ENCODE measurements at regions of chr1 and their contacts with region 1.

Region 1: DNA sequence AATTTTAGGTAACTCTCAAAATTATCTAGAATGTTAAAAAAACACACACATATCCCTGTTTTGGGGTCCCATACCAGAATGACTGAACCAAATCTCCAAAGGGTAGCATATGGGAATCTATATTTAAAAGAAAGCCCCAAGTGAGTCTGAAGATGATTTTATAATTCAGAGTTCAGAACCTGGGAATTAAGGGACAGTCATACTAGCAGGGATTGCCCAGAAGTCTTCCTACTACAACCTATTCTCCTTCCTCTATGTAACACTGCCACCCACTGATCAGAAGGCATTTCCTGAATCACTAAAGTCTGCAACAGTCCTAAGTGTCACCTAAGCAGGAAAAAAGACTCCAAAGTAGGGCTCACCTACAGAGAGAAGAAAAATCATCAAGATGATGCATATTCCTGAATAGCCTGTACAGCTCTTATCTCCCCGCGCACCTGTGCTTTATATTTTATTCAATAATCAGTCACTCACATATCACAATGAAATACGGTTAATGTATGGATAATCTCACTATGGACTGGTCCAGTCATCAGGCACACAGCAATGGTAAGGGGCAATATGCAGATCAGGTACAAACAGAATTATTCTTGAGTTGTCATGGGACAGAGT is 4.9 kb downstream of the RGS1 start:
- DNase-seq: no peak
- ATAC-seq: peak; percentile 22
- H3K4me3 Mint-ChIP-seq: peak overlapping the region; percentile 36
- H3K27ac Mint-ChIP-seq: peak overlapping the region; percentile 1
- H3K4me1 Mint-ChIP-seq: peaks cover 30% of the 10 kb centered on the region
- H3K27me3 Mint-ChIP-seq: no peaks in the 10 kb centered on the region
- CTCF ChIP-seq: peak; percentile 47

Region 2: GRCh38 chr1:192506741-192507155 is 73.7 kb before region 1 on chr1:
- CTCF ChIA-PET with region 1: interaction called, 11 read pairs
- POLR2A ChIA-PET with region 1: no interaction called
- intact Hi-C with region 1: loop called (anchors 2 kb)
- DNase-seq: peak; percentile 39
- ATAC-seq: peak; percentile 82
- H3K4me3 Mint-ChIP-seq: no peak overlapping the region
- H3K27ac Mint-ChIP-seq: no peak overlapping the region
- H3K4me1 Mint-ChIP-seq: no peaks in the 10 kb centered on the region
- H3K27me3 Mint-ChIP-seq: no peaks in the 10 kb centered on the region
- CTCF ChIP-seq: peak; percentile 28

Region 3: DNA sequence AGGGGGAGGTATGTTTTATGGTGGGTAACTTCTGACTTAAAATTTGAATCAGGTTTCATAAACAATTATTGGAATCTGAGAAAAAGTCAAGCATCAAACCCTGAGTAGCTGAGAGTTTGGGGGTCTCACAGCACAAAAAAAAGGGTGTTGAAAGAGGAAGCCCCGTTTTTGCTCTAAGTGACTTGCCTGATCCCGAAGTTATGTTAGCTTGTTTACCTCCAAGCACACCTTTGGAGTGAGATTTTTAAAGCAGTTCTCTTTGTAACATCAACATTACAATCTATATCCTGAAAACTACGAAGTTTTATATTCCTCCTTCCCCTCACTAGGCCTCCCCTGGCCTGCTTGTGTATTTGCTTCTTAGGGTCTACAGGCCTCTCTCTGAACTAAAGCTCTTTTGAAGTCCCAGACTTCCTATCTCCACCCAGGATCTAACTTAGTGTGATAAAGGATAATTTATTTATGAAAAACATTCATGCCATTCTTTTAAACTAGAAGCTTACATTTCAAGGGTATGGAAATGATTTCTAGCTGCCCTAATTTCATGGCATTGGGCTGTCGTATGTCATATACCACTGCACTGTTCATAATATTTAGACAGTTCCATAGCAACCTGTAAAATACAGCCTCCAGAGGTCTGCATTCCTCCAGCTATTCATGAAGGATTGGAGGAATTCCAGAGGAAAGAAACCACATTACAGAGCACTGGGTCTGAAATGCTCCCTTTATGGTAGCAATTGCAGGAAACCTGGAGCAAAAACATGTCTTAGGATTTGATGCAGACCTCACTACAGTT is 41.0 kb before region 1 on chr1:
- CTCF ChIA-PET with region 1: interaction called, 9 read pairs
- POLR2A ChIA-PET with region 1: interaction called, 3 read pairs
- intact Hi-C with region 1: loop called (anchors 5 kb)
- DNase-seq: no peak
- ATAC-seq: peak; percentile 22
- H3K4me3 Mint-ChIP-seq: no peak overlapping the region
- H3K27ac Mint-ChIP-seq: peak overlapping the region; percentile 83
- H3K4me1 Mint-ChIP-seq: peaks cover 50% of the 10 kb centered on the region
- H3K27me3 Mint-ChIP-seq: no peaks in the 10 kb centered on the region
- CTCF ChIP-seq: no peak

Region 4: GRCh38 chr1:192626366-192627179 is 46.1 kb after region 1 on chr1:
- CTCF ChIA-PET with region 1: no interaction called
- POLR2A ChIA-PET with region 1: no interaction called
- intact Hi-C with region 1: no loop called
- DNase-seq: no peak
- ATAC-seq: no peak
- H3K4me3 Mint-ChIP-seq: no peak overlapping the region
- H3K27ac Mint-ChIP-seq: no peak overlapping the region
- H3K4me1 Mint-ChIP-seq: no peaks in the 10 kb centered on the region
- H3K27me3 Mint-ChIP-seq: peaks cover 5% of the 10 kb centered on the region
- CTCF ChIP-seq: no peak